ENCODE measurements at regions of chr10 and their contacts with region 1.

Region 1: DNA sequence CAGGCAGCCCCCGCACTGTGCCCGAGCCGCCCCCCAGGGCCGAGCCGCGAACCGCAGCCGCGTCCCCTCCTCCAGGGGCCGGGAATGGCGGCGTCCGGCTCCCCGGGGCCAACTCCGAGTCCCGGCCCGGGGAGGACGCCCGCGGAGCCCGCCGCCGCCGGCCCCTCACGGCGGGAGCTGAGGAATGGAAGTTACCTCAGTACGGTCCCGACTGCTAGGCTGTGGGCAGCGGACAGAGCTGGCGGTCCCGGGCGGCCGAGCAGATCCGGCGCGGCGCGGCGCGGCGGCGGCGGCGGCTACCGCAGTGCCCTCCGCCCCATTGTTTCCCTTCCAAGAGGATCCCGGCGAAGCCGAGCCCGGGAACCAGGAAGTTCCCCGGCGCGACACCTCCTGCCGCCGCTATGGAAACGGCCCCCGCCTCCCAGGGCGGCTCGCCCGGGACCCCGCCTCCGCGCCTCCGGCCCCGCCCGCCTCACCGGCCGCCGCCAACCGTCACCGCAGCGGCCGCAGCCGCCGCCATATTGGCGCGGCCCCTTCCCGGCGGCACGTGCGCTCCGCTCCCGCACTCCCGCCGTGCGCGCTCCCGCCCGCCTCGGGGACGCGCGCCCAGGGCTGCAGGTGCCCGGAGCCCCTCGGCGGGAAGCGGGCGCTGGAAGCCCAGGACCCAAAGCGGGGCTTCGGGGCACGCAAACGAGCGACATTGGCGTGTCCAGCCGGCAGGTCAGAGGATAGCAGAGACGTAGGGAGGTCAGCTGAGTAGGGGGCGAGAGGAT is at the start of gene USP6NL:
- DNase-seq: peak; percentile 70
- H3K4me3 Mint-ChIP-seq: peak within 1 kb of the TSS; percentile 84
- H3K27ac Mint-ChIP-seq: peak within 1 kb of the TSS; percentile 73
- H3K4me1 Mint-ChIP-seq: peaks cover 40% of the 10 kb centered on the region
- H3K27me3 Mint-ChIP-seq: no peaks in the 10 kb centered on the region
- total RNA-seq, gene USP6NL: 6.9 to 7.5 TPM

Region 2: GRCh38 chr10:11539191-11539868 is 72.1 kb before region 1 on chr10:
- CTCF ChIA-PET with region 1: no interaction called
- intact Hi-C with region 1: loop called (anchors 1 kb)
- DNase-seq: peak; percentile 25
- H3K4me3 Mint-ChIP-seq: no peak overlapping the region
- H3K27ac Mint-ChIP-seq: no peak overlapping the region
- H3K4me1 Mint-ChIP-seq: peaks cover 19% of the 10 kb centered on the region
- H3K27me3 Mint-ChIP-seq: no peaks in the 10 kb centered on the region

Region 3: GRCh38 chr10:11631890-11632587 is 20.6 kb after region 1 on chr10:
- CTCF ChIA-PET with region 1: no interaction called
- intact Hi-C with region 1: loop called (anchors 1 kb)
- DNase-seq: peak; percentile 76
- H3K4me3 Mint-ChIP-seq: no peak overlapping the region
- H3K27ac Mint-ChIP-seq: no peak overlapping the region
- H3K4me1 Mint-ChIP-seq: peaks cover 13% of the 10 kb centered on the region
- H3K27me3 Mint-ChIP-seq: no peaks in the 10 kb centered on the region

Region 4: GRCh38 chr10:11684717-11685645 is 73.5 kb after region 1 on chr10:
- CTCF ChIA-PET with region 1: no interaction called
- intact Hi-C with region 1: loop called (anchors 1 kb)
- DNase-seq: peak; percentile 86
- H3K4me3 Mint-ChIP-seq: peak overlapping the region; percentile 75
- H3K27ac Mint-ChIP-seq: peak overlapping the region; percentile 95
- H3K4me1 Mint-ChIP-seq: peaks cover 36% of the 10 kb centered on the region
- H3K27me3 Mint-ChIP-seq: peaks cover 1% of the 10 kb centered on the region

Region 5: DNA sequence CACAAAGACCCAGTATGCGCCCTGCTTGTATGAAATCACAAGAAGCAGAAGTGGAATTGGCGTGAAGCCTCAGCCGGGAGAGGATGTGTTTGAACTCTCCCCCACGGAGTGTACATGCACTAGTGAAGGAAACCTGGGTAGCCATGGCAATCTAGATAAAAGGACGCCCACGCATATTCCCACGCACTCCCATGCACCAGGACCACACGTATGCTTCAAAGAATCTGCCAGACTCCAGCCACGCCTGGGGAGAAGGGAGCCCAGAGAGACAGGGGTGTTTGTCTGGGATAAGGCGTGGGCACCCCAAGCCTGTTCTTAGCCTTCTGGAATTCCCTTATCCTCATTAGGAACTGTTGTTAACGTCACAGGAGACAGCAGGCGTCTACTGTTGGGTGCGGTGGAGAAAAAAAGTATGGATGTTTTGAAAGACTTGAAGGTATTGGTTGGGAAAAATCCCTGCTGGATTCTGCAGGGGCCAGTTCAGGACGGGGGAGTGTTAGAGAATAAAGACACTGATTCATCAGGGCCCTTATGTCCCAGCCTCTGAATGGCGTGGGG is 101.8 kb after region 1 on chr10:
- CTCF ChIA-PET with region 1: interaction called, 4 read pairs
- intact Hi-C with region 1: loop called (anchors 1 kb)
- DNase-seq: no peak
- H3K4me3 Mint-ChIP-seq: no peak overlapping the region
- H3K27ac Mint-ChIP-seq: no peak overlapping the region
- H3K4me1 Mint-ChIP-seq: peaks cover 17% of the 10 kb centered on the region
- H3K27me3 Mint-ChIP-seq: peaks cover 32% of the 10 kb centered on the region